T-cell (primary cell): ENCODE measurements at regions of chr2 and their contacts with region 1.

Region 1: DNA sequence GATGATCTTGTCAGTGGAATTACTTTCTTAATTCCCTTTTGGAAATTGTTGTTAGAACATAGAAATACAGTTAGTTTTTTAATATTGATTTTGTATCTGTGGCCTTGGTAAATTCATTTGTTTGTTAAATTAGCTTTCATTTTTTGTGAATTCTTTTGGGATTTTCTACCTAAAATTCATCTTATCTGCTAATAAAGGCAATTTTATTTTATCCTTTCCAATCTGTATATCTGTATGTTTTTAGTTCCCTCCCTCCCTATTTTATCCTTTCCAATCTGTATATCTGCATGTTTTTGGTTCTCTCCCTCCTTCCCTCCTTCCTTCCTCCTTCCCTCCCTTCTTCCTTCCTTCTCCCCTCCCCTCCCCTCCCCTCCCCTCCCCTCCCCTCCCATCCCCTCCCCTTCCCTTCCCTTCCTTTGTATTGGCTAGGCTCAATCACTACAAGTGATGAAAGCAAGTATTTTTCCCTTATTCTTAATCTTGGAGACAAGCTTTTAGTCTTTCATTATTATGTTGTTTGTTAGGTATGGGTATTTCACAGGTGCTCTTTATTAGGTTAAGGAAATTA is 244.4 kb downstream of the ALK start:
- DNase-seq: no peak
- ATAC-seq: no peak
- H3K4me3 ChIP-seq: no peak overlapping the region
- H3K4me3 Mint-ChIP-seq: no peak overlapping the region
- H3K27ac ChIP-seq: no peak overlapping the region
- H3K27ac Mint-ChIP-seq: no peak overlapping the region
- H3K4me1 ChIP-seq: no peaks in the 10 kb centered on the region
- H3K4me1 Mint-ChIP-seq: no peaks in the 10 kb centered on the region
- H3K27me3 ChIP-seq: no peaks in the 10 kb centered on the region
- H3K27me3 Mint-ChIP-seq: peaks cover 19 to 24% of the 10 kb centered on the region in 2 donors

Region 2: DNA sequence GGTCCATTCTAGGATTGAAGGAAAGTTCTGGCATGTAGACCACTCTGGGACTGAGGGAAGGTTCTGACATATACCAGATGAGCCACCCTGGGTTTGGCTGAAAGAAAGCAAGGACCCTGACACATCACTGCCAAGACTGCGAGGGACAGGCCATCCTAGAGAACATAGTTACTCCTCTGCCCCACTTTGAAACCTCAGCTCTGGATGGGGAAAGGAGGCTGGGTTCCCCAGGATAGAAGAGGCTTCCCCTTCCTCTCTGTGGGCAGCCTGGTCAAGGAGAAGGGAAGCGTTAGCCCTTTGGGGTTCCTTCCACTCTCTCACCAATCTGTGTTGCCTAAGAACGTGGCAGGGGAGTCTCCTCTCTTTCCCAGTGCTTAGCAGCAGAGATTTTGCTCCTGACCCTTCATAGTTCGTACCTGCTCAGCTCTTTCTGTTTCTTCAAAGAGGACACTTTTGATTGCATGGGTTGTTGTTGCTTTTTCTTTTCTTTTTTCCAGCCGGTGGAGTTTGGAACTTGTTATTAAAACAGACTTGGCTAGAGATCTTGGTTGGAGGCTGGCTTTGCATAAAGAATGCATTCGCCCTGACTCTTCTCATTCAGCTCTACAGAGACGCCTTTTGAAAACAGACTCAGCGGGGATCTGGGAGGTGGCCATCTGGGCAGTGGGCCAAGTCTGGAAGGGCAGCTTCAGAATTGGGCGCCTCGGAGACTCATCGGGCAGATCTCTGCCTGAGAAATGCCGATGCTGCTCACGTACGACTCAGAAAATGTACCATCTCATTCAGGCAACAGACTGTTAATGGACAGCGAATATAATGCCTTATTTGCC is 395.7 kb before region 1 on chr2:
- CTCF ChIA-PET with region 1: no interaction called
- POLR2A ChIA-PET with region 1: no interaction called
- DNase-seq: no peak
- ATAC-seq: no peak
- H3K4me3 ChIP-seq: no peak overlapping the region
- H3K4me3 Mint-ChIP-seq: no peak overlapping the region
- H3K27ac ChIP-seq: no peak overlapping the region
- H3K27ac Mint-ChIP-seq: no peak overlapping the region
- H3K4me1 ChIP-seq: no peaks in the 10 kb centered on the region
- H3K4me1 Mint-ChIP-seq: no peaks in the 10 kb centered on the region
- H3K27me3 ChIP-seq: peaks cover 0 to 23% of the 10 kb centered on the region in 2 experiments
- H3K27me3 Mint-ChIP-seq: peaks cover 37 to 42% of the 10 kb centered on the region in 2 donors

Region 3: GRCh38 chr2:29733965-29734364 is 57.0 kb after region 1 on chr2:
- CTCF ChIA-PET with region 1: no interaction called
- POLR2A ChIA-PET with region 1: no interaction called
- DNase-seq: no peak
- ATAC-seq: no peak
- H3K4me3 ChIP-seq: no peak overlapping the region
- H3K4me3 Mint-ChIP-seq: no peak overlapping the region
- H3K27ac ChIP-seq: no peak overlapping the region
- H3K27ac Mint-ChIP-seq: no peak overlapping the region
- H3K4me1 ChIP-seq: no peaks in the 10 kb centered on the region
- H3K4me1 Mint-ChIP-seq: peaks cover 0 to 3% (median 0%) of the 10 kb centered on the region in 3 donors
- H3K27me3 ChIP-seq: peaks cover 0 to 4% of the 10 kb centered on the region in 2 experiments
- H3K27me3 Mint-ChIP-seq: peaks cover 20 to 27% of the 10 kb centered on the region in 2 donors

Region 4: DNA sequence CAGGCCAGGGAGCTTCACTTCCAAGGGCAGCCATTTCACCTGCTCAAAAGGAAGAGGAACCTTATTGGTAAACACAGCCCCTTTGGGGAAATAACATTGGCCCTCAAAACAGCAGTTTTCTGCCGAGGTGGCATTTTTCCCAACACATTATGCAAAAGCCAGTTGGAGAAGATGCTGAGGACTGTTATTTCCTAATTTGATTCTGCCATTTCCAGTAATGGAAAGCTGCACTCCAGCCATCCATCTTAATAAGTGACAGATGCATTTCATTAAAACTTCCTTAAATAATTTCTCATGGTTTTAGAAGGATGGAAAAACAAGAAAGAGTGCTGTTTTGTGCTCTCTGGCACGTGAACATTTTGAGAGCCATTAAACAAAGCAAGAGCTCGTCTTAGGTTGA is 300.3 kb after region 1 on chr2:
- CTCF ChIA-PET with region 1: no interaction called
- POLR2A ChIA-PET with region 1: interaction called in 1 of 2 experiments, 14 read pairs
- DNase-seq: no peak
- ATAC-seq: no peak
- H3K4me3 ChIP-seq: no peak overlapping the region
- H3K4me3 Mint-ChIP-seq: no peak overlapping the region
- H3K27ac ChIP-seq: no peak overlapping the region
- H3K27ac Mint-ChIP-seq: no peak overlapping the region
- H3K4me1 ChIP-seq: no peaks in the 10 kb centered on the region
- H3K4me1 Mint-ChIP-seq: no peaks in the 10 kb centered on the region
- H3K27me3 ChIP-seq: no peaks in the 10 kb centered on the region
- H3K27me3 Mint-ChIP-seq: peaks cover 0 to 10% of the 10 kb centered on the region in 2 donors